Cardiac septum (tissue), 1 donor: ENCODE measurements at regions of chr5 and their contacts with region 1.

Region 1: GRCh38 chr5:42889311-42889933 is 77.7 kb upstream of the SELENOP start:
- DNase-seq: peak; percentile 78

Region 2: DNA sequence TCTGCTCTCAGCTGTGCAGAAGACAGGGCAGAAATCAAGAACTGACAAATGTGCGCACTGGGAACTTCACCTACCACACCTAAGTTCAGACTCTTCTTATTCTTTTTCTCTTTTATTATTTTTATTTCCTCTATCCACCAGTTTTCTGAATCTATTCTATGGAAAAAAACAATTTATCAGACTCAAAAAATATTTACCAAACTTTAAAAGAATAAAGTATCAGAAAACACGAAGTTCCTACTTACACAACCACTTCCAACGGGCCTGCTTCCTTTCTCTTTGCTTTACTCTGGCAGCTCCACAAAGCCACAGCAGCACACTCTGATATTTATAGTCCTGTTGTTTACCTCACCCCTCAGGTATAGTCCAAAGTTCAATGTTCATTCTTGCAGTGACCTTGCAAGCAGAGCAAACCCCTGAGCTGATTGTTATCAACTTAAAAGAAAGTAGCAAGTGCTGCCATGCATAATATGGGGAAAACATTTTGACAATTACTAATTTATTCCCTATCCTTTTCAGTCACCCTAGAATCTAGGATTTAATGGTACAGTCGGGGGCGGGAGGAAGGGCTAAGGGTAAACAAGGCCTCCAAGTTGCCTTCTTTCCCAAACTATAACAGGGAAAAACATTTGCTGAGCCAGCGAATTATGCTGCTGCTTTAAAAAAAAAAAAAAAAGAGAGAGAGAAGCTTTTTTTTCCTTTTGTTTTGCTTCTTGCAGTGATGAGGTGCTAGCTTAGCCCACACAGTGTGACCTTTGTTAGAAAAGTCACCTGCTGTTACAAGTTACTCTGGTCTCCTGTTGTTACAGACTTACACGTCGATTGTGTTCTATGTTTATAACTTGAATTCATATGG is 77.6 kb before region 1 on chr5 and contains the start of gene SELENOP:
- intact Hi-C with region 1: loop called (anchors 2 kb)
- DNase-seq: no peak
- total RNA-seq, gene SELENOP: 149 TPM